ENCODE measurements at regions of chr9 and their contacts with region 1.

Region 1: GRCh38 chr9:37913480-37914153 is 9.7 kb upstream of the SLC25A51 start:
- DNase-seq: peak; percentile 69 to 98 (median 92)

Region 2: GRCh38 chr9:37650873-37651768 is 262.5 kb before region 1 on chr9 and contains the start of gene FRMPD1:
- intact Hi-C with region 1: no loop called
- DNase-seq: peak in 9 of 10 donors; percentile 17 to 91 (median 39)

Region 3: DNA sequence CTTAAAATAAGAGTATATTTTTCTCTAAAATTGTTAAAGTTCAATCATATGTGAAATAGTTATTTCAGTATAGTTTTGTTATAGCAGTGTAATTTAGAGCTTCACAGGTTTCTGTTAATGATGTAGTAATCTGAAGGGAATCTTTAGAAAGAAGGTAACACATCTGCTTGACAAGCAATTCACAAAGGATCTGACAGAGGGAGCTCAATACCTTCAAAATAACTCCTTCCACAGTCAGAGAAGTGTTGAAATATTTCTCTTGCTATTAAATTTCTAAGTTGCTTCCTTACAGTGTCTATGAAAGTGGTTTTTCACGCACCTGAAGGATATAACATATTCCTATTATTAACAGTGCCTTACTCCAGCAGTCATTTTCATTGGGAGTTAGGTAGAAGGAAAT is 54.6 kb before region 1 on chr9:
- intact Hi-C with region 1: no loop called
- DNase-seq: no peak

Region 4: DNA sequence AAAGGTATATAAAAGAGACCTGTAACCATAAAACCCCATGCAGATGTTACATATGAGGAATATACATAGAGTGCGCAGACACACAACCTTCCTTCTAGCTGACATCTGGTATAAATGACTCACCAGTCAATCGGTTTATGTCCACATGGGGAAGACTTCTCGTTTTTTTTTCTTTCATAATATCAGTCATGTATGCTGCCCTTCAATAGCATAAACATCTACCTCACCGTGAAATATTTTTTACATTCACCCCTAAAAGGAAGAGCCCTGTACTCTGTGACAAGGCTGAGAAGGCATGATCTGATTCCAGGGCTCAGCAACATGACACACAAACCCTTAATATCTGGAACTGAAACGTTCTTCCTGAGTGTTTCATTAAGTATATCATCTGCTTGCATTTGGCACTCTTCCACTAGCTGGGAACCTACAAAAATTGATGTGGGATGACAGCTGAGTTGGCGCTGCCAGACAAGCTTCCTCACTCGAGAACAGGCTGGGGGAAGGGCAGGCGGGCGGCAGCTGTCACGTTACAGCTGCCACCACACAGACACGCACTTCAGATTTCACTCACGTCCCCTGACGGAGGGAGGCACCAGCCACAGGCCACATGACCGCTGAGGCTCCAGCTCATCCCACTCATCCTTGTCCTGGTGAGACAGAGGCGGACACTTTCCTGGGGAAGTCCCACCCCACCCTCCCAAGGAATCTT is 81.2 kb after region 1 on chr9:
- intact Hi-C with region 1: loop called (anchors 5 kb)
- DNase-seq: peak; percentile 83 to 99 (median 93)

Region 5: DNA sequence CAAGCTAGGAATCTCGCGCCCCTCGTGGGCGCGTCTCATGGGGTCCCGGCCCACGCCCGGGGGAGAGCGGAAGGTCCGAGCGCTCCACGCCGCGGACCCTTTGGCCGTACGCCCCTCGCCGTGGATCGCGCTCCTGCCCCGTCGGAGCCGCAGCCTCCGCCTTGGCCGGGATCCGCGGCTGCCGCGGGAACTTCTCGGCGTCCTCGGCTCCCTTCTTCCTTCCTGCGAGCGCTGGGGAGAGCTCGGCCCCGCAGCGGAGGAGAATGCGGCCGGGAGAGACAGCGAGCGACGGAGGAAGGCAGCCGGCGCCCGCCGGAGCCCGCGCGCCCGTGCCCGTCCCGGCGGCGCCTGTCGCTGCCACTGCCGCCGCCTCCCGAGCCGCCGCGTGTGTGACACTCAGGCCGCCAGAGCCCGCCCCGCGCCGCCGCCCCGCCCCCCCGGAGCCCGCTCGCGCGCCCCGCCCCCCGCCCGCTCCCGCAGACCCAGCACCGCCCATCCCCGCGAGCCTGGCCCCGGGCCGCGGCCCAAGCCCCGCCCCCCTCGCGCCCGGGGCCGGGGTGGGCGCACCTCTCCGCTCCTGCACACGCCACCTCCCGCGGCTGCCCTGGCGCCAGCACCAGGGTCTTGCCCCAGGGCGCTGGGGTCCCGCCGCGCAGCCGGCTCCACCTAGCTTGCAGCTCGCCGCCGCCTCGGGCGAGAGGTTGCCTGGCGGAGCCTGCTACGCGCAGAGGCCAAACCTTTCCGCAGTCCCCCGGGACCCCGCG is 155.4 kb after region 1 on chr9 and contains the start of gene SHB:
- intact Hi-C with region 1: loop called (anchors 1 kb)
- DNase-seq: peak; percentile 67 to 97 (median 73)

Region 6: DNA sequence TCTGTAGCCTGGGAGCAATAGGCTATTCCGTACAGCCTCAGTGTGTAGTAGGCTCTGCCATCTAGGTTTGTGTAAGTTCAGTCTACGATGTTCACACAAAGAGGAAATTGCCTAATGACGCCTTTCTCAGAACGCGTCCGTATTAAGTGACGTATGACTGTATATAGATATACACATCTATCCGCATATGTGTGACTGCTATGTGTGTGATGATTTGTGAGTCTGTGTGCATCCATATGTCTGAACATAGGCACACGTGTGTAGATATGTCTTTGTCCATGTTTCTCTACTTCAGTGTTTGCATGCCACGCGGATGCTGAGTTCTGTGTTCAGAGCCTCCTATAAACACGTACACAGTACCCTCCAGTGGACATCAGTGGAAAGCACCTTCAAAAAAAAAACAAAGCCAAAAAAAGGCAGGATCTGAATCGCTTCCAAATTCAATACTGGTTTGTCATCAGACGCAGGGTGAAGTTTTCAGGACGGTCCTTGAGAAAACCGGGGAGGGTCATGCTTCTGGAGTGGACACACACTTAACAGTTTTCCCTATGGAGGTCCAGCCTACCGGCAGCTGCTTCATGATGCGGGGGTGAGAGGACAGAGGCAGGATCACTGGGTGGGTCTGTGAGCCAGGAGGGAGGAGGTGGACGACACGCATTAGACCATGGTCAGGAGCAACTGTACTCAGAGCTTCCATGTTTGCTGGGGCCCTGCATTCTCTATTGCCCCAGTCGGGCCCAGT is 449.4 kb after region 1 on chr9:
- intact Hi-C with region 1: loop called (anchors 2 kb)
- DNase-seq: peak in 5 of 10 donors; percentile 23 to 88 (median 40)

Region 7: DNA sequence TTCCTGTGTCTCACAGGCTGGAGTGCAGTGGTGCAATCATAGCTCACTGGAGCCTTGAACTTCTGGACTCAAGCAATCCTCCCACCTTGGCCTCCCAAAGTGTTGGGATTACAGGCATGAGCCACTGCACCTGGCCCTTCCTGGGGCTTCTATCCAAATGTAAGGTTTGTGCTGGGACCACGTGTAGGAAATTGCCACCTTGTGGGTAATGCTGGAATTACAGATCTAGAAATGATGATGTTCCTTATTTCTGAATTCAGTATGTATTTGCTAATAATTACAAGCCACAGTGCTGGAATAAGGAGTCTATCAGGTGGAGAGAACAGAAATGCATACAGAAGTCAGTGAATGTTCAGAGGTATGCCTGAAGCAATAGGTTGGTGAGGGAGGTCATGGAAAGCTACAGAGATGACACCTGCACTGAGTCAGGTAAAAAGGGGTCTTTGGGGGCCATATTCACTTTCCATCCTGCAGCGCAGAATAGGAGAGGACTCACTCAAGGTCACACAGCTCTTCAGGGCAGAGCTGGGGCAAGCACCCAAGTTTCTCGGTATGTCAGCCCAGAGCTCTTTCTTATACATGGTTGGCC is 519.4 kb after region 1 on chr9:
- intact Hi-C with region 1: loop called (anchors 10 kb)
- DNase-seq: no peak

Measured in posterior cingulate gyrus (tissue), 11 donors.